A673 (cell line): ENCODE measurements at regions of chr5 and their contacts with region 1.

Region 1: DNA sequence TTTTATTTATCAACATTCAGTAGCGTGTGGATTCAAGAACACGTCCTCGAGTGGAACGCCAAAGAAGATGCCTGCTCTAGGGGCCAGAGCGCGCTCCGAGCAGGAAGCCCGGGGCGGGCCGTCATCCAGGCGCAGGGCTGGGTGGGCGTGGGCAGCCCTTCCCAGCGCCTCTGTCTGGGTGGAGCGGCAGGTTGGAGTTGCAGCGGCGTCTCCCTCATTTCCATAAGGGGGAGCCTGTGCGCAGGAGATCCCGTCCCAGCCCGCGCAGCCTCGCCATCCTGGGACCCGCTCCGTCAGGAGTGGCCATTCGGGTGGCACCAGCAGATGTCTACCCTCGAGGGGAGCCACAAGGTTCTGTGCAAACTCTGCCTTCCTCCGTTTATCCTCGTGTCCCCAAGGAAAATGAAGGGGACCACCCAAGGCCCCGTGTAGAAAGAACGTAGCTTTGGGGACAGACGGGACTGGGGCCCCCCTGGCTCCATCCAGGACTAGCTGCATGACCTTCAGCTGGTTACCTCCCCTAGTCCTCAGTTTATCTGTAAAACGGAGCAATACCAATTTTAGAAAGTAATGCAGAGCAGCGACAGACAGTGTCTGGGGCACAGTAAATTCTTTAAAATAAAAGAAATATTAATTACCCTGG is 155.5 kb upstream of the SMIM23 start:
- DNase-seq: peak; percentile 64
- H3K4me3 ChIP-seq: no peak overlapping the region
- H3K27ac ChIP-seq: no peak overlapping the region
- H3K4me1 ChIP-seq: no peaks in the 10 kb centered on the region
- H3K27me3 ChIP-seq: peaks cover 6% of the 10 kb centered on the region
- CTCF ChIP-seq: peak; percentile 53

Region 2: GRCh38 chr5:171418316-171418981 is 211.7 kb before region 1 on chr5:
- CTCF ChIA-PET with region 1: no interaction called
- POLR2A ChIA-PET with region 1: no interaction called
- intact Hi-C with region 1: loop called (anchors 10 kb)
- DNase-seq: peak; percentile 59
- H3K4me3 ChIP-seq: peak overlapping the region; percentile 46
- H3K27ac ChIP-seq: no peak overlapping the region
- H3K4me1 ChIP-seq: peaks cover 8% of the 10 kb centered on the region
- H3K27me3 ChIP-seq: peaks cover 7% of the 10 kb centered on the region
- CTCF ChIP-seq: peak; percentile 78

Region 3: DNA sequence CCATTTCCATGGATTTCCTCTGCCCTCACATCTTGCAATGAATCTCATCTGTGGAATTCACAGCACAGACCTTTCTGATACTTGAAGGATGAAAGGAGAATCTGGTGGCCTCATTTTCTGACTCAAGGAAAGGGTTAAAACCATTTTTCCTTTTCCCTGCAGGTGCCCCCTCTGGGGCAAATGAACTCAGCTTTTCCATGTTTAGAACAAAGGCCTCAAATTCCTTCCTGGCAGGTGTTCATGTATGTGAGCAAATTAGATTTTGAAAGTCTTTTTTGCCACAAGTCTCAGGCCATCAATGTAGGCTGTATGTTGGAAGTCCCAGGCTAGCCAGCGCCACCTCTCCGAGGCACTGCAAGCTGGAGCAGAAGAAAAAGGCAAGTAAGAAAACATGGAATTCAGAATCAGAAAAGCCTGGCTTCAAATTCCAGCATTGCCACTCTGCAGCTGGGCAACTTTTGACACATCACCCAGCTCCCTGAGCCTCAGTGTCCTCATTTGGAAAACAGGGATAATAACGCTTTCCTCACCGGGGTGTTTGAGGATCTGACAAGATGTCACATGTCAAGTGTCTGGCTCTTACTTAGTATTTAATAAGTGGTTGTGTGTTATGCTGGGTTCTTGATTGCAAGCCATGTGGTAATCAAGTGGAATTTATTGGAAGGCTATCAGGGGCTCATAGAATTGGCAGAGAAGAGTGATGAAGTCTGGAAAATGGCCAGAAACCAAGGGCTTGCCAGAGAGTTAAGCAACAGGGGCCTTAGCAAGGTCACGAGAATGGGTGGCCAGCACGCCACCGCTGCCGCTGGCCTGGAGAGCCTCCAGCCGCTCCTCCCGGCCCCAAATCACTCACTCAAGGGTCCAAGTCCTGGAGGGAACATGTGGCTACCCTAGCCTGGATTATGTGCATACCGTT is 107.1 kb after region 1 on chr5:
- CTCF ChIA-PET with region 1: no interaction called
- POLR2A ChIA-PET with region 1: interaction called, 21 read pairs
- intact Hi-C with region 1: no loop called
- DNase-seq: no peak
- H3K4me3 ChIP-seq: no peak overlapping the region
- H3K27ac ChIP-seq: no peak overlapping the region
- H3K4me1 ChIP-seq: no peaks in the 10 kb centered on the region
- H3K27me3 ChIP-seq: no peaks in the 10 kb centered on the region
- CTCF ChIP-seq: no peak

Region 4: DNA sequence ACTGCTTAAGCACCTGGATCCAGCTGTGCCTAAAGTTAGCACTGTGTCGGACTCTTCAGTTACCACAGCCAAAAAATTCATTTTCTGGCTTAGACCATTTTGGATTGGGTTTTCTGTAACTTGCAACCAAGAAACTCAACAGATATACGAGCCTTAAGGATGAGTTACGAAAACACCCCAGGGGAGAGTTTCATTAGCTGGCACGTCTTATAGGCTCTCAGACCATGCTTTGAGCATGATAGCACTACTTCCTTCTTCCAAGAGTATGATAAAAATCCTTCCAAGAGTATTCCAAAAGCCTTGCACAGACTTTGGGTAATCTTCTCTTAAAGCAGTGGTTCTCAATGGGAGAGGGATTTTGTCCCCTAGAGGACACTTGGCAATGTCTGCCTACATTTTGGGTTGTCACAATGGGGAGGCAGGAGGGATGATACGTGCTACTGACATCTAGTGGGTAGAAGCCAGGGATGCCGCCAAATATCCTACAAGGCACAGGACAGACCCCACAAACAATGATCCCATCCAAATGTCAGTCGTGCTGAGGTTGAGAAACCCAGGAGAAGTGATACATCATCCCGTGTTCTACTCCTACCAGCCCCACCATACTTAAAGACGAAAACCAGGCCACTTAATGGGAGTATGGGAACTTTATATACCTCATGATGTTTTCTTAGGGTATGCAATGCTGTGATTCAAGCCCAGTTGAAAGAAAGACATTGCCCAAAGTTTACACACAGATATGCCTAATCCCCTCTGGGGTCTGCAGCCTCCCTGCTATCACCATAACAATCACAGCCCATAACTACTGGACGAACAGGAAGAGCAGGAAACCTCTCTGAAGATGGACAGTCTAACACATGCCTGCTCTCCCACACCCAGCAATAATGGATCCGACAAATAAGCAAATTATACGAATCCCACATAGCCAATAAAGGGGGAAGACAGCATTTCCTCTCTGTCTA is 220.5 kb after region 1 on chr5:
- CTCF ChIA-PET with region 1: no interaction called
- POLR2A ChIA-PET with region 1: no interaction called
- intact Hi-C with region 1: loop called (anchors 10 kb)
- DNase-seq: peak; percentile 68
- H3K4me3 ChIP-seq: no peak overlapping the region
- H3K27ac ChIP-seq: no peak overlapping the region
- H3K4me1 ChIP-seq: no peaks in the 10 kb centered on the region
- H3K27me3 ChIP-seq: no peaks in the 10 kb centered on the region
- CTCF ChIP-seq: peak; percentile 58

Region 5: GRCh38 chr5:172044631-172045314 is 414.6 kb after region 1 on chr5:
- CTCF ChIA-PET with region 1: no interaction called
- POLR2A ChIA-PET with region 1: no interaction called
- intact Hi-C with region 1: loop called (anchors 10 kb)
- DNase-seq: peak; percentile 53
- H3K4me3 ChIP-seq: no peak overlapping the region
- H3K27ac ChIP-seq: no peak overlapping the region
- H3K4me1 ChIP-seq: no peaks in the 10 kb centered on the region
- H3K27me3 ChIP-seq: no peaks in the 10 kb centered on the region
- CTCF ChIP-seq: 0 out of 2 replicates have a peak, but pooled peaks have one; percentile 25